ENCODE measurements at regions of chr10 and their contacts with region 1.

Region 1: DNA sequence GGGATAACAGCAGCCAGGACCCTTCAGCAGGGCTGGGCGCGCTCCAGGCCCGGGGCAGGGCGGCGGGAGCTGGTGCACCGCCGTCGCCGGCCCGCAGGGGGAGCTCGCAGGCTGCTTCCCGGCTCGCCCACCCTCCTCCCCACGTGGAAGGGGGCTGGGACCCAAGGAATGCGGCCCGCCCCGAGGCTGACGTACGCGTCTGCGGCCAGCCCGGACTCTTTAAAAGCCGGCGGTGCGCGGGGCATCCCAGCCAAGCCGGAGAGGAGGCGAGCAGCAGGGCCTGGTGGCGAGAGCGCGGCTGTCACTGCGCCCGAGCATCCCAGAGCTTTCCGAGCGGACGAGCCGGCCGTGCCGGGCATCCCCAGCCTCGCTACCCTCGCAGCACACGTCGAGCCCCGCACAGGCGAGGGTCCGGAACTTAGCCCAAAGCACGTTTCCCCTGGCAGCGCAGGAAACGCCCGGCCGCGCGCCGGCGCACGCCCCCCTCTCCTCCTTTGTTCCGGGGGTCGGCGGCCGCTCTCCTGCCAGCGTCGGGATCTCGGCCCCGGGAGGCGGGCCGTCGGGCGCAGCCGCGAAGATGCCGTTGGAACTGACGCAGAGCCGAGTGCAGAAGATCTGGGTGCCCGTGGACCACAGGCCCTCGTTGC is at the start of gene PFKFB3:
- DNase-seq: peak; percentile 97
- CTCF ChIP-seq: peak; percentile 97

Region 2: DNA sequence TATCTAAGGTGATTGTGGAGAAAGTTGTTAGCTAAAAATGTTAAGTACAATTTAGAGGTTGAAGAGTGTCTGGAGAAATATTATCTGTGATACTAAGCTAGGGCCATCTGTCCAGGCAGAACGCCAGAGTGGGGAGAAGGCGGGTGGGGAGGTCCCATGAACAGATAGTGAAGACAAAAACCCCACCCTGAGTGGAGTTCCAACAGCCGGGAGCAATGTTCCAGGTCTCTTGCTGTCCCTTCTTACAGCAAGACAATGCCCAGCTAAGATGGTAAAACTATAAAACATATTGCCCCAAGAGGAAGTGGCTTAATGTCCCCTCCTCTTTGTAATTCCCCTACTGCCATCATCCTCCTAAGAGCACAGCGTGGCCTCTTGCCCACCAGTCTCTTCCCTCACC is 215.1 kb before region 1 on chr10:
- CTCF ChIA-PET with region 1: no interaction called
- POLR2A ChIA-PET with region 1: no interaction called
- DNase-seq: no peak
- CTCF ChIP-seq: no peak

Region 3: DNA sequence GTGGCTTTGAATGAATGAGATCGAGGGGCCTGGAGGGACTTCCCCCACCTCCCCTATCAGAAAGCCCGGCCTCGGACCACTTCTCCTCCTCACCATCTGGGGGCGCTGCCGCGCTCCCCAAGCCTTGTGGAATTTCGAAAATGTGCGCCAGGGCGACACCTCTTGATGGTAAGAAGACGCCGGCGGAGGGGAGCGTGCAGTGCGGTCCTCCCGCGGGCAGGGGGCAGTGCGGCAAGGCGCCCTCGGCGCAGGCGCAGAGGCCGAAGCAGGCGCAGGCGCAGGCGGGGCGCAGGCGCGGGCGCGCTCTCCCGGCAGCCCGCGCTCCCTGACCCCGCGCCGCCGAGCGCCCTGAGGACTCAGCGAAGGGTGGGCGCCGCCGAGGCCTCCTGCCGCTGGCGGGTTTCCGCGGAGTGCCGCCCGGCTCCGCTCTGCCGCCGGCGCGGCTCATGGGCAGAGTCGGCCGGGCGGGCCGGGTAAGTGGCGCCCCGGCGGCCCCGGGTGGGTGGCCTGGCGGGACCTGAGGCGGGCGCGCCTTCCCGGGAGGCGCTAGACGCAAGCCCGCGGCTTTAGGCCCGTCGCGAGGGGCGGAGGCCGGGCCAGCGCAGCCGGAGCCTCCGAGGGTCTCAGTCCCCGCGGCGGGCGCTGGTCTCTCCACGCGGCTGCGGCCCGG is 114.0 kb before region 1 on chr10 and contains the start of gene RBM17:
- CTCF ChIA-PET with region 1: interaction called, 16 read pairs
- POLR2A ChIA-PET with region 1: interaction called, 7 read pairs
- DNase-seq: peak; percentile 95
- CTCF ChIP-seq: peak; percentile 100

Region 4: DNA sequence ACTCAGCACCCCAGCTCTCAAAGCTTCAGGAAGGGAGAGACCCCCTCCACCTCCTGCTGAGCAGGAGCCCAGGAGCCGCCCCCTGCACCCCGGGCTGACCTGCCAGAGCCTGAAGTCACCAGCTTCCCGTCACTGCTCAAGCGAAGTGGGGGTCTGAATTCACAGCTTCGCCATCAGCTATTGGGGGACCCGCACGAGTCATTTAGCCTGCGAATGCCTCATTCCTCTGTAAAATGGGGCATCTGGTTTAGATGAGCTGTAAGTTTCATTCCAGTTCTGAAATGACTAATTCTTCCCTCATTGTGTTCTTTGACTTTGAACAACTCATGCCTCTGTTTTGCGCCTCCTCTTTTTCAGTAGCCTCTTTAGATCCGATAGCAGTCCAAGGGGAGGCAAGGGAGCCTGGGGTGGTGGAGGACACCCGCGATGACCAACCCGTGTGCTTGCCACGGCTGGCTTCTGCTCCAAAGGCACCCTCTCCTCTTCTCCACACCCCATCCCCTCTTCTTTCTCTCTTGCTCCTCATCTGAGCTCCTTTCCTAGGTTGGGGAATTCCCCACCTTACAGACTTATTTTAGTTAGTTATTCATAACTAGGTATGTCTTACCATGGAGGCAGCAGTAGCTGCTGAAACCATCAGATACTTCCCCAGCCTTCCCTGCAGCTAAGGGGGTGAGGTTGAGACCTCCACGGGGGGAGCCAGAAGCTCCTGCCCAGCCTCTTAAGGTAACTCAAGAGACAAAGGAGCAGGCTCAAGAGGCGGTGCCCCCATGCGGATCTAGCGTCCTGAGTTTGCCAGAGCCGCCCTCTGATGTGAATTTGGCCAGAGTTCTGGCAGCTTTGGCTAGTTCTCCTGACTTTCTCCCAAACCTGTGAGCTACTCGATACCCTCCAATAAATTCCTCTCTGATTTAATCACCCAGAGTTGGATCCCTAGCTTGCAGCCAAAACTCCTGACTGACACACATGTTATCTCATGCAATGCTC is 66.3 kb before region 1 on chr10:
- CTCF ChIA-PET with region 1: interaction called, 21 read pairs
- POLR2A ChIA-PET with region 1: interaction called, 19 read pairs
- DNase-seq: peak; percentile 78
- CTCF ChIP-seq: no peak

Region 5: DNA sequence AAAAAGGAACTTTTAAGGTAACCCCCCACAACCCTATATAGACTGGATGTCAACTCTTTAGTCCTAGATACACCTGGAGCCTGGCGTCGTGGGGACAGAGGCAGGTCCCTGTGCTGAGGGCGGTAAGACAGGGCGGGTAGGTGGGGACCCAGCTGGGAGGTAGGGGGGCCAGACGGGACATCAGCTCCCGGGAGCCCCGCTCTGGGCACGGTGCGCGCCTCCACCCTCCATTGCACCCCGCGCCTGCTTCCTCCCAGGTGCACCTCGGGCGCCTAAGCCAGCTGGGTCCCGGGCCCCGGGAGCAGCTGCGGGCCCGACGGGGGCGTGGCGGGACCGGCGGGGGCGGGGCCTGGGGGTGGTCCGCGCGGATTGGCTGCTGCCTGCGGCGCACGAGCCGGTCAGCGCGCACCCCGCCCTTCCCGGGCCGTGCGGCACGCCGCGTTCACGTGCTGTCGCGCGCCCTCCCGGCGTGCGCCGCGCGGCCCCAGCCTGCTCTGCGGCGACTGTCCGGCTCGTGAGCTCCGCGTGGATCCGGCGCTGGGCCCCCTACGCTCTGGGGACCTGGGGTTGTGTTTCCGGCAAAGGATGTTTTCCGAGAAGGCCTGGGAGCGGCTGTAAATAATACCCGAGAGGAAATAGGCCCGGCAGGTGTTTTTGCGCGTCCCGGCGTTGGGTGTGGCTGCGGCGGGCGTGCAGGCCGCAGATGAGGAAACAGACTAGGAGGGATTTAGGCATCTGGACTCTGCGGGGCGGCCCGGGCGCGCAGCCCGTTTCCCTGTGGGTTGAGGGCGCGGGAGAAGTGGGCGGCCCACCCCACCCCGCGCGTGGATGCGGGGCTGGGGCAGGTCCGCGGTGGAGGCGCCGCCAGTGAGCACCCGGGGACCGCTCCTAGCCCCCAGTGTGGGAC is 39.2 kb before region 1 on chr10:
- CTCF ChIA-PET with region 1: interaction called, 9 read pairs
- POLR2A ChIA-PET with region 1: interaction called, 10 read pairs
- DNase-seq: peak; percentile 97
- CTCF ChIP-seq: peak; percentile 13

Region 6: GRCh38 chr10:6218692-6219493 is 16.1 kb after region 1 on chr10:
- CTCF ChIA-PET with region 1: interaction called, 13 read pairs
- POLR2A ChIA-PET with region 1: interaction called, 7 read pairs
- DNase-seq: no peak
- CTCF ChIP-seq: no peak

Region 7: DNA sequence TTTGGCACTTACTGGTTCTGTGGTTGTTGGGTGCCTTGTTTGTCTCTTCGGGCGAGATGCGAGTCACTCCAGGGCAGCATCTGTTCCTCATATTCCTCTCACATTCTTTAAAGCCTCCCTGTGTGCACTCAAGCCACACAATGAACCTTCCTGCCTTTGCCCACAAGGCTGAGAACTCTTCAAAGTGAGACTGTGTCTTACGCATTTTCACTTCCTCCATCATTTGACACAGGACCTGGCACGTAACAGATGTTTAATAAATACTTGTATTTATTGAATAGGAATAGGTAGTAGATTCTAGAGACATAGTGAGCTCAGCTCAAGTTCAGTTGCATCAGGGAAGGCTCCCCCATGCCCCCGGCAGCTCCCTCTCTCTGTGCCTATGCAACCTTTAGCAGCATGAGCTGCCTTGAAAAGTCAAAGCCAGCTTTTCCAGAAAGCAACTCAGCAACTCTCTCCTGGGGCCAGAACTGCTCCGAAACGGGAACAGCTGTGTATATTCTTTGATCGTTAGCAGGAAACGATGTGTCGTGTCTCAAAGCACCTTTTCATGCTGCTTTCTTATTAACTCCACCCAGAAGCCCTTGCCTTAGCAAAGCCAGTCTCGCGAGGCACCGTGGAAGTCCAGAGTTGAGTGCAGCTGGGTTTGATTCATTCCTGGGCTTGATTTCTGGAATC is 97.4 kb after region 1 on chr10:
- CTCF ChIA-PET with region 1: interaction called, 10 read pairs
- POLR2A ChIA-PET with region 1: interaction called, 13 read pairs
- DNase-seq: peak; percentile 69
- CTCF ChIP-seq: no peak

Region 8: GRCh38 chr10:6390213-6390845 is 187.5 kb after region 1 on chr10:
- CTCF ChIA-PET with region 1: interaction called, 16 read pairs
- POLR2A ChIA-PET with region 1: interaction called, 3 read pairs
- DNase-seq: no peak
- CTCF ChIP-seq: no peak

Region 9: GRCh38 chr10:6423004-6423403 is 220.2 kb after region 1 on chr10:
- CTCF ChIA-PET with region 1: no interaction called
- POLR2A ChIA-PET with region 1: no interaction called
- DNase-seq: no peak
- CTCF ChIP-seq: no peak

Region 10: DNA sequence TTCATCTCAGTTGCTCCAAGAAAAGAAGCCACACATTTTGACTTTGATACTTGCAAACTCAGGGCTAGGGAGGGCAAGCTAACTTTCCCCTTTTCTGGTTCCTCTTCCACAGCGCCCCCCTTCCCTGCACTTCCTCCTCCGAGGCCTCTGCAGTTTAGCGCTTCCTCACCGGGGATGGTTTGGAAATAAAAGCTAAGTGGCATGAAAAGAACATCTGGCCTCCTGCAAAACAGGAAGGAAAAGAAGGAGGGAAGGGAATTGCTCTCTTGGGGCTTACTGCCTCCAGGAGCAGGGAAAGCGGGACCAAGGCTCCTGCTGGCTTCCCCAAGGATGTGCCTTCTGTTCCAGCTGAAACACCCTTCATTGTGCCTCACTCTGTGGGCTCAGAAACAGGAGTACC is 335.0 kb after region 1 on chr10:
- CTCF ChIA-PET with region 1: no interaction called
- POLR2A ChIA-PET with region 1: no interaction called
- DNase-seq: no peak
- CTCF ChIP-seq: no peak

Region 11: DNA sequence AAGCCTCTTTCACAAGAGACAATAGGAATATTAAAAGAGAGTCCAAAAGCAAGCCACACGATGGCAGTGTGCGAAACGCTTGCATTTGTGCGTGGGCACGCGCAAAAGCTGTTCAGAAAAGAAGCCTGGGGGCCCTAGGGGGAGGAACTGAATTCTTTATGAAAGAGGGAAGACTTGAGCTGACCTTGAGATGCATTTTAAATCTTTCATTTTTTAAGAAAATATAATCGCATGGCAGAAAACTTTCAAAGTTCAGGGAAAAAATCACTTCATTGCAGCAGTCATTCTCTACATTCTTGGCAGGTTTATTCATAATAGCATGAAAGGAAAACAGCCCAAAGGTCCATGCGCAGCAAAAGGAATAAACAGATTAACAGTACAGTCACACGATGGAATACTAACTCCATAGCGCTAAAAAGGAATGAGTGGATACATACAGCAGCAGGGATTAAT is 583.8 kb after region 1 on chr10:
- CTCF ChIA-PET with region 1: no interaction called
- POLR2A ChIA-PET with region 1: no interaction called
- DNase-seq: no peak
- CTCF ChIP-seq: no peak

Measured in GM10248 (cell line).